Heart left ventricle (tissue), 16 donors: ENCODE measurements at regions of chr18 and their contacts with region 1.

Region 1: GRCh38 chr18:50429207-50429948 is 54.5 kb downstream of the SKA1 start:
- DNase-seq: no peak
- ATAC-seq: no peak
- H3K4me3 ChIP-seq: no peak overlapping the region
- H3K27ac ChIP-seq: no peak overlapping the region
- H3K4me1 ChIP-seq: peaks cover 0 to 2% (median 0%) of the 10 kb centered on the region in 12 donors
- H3K27me3 ChIP-seq: no peaks in the 10 kb centered on the region
- CTCF ChIP-seq: peak in 11 of 12 donors; percentile 32 to 62 (median 55)
- POLR2A ChIP-seq: no peak

Region 2: DNA sequence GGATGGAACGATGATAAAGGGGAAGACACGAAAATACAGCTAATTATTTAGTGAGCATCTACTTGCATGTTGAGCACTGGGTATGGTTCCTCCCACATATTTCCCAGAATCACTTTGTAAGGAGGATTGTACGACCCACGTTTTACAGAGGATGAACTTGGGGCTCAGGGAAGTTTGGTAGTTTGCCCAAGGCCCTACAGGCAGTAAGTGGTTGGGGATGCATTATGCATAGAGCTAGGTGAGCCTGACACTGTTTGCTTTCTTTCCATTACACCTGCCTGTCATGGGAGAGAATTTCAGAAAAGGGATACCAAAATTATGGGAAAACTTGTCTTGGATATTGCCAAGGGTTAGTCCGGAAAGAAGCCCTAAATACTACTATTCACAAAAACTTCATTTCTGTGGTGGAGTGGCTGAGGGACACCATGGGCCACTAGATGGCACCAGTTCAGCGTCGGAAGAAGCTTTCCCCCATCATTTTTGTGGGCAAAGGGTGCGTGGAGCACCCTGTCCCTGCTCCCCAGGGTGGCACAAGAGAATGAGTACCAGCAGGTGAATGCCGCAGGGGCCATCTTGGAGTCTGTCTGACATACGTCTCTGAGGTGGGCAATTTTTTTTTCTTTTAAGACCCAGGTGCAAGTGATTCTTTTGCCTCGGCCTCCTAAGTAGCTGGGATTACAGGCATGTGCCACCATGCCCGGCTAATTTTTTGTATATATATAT is 918.8 kb before region 1 on chr18:
- intact Hi-C with region 1: loop called in 2 of 10 experiments (anchors 5 kb)
- DNase-seq: peak in 4 of 5 donors; percentile 31 to 64 (median 42)
- ATAC-seq: peak in 3 of 4 donors; percentile 52 to 72 (median 66)
- H3K4me3 ChIP-seq: no peak overlapping the region
- H3K27ac ChIP-seq: no peak overlapping the region
- H3K4me1 ChIP-seq: no peaks in the 10 kb centered on the region
- H3K27me3 ChIP-seq: peaks cover 0 to 6% (median 0%) of the 10 kb centered on the region in 9 donors
- CTCF ChIP-seq: peak; percentile 71 to 87 (median 81)
- POLR2A ChIP-seq: no peak

Region 3: DNA sequence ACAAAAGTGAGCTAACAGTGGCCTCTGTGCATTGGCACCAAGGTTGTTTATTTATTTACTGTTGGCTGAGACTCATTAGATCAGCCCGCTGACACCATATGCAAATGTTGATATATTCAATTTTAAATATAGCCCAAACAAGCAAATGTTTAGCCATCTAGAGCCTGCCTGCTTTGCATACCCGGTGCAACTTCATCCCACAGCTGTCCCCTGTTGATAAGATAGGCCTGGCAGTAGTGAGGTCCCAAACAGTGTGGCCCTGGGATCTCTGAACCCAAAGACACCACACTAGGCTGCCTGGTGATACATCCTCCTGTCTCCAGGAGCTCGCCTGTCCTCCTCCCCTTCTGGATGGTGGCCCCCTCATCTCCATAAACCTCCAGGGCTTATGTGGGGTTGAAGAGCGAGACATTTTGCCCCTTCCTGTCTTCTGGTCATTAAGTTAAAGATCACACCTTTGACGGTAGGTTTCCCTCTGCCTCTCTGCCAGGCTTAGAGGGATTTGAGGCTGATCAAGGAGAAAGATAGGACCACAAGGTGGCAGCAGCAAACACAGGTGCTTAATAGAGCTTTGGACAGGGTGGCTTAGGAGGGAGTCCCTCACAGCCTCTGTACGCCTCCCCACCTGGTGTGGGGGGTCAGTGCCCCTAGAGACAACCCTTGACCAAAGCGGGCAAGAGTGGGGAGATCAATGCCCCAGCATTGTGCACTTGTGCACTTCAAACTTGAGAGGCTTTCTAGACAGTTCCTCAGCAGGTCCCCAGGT is 210.8 kb before region 1 on chr18:
- intact Hi-C with region 1: loop called in 6 of 10 experiments (anchors 2 to 10 kb)
- DNase-seq: no peak
- ATAC-seq: peak in 2 of 4 donors; percentile 34 to 46
- H3K4me3 ChIP-seq: no peak overlapping the region
- H3K27ac ChIP-seq: no peak overlapping the region
- H3K4me1 ChIP-seq: peaks cover 0 to 5% (median 0%) of the 10 kb centered on the region in 12 donors
- H3K27me3 ChIP-seq: peaks cover 0 to 5% (median 0%) of the 10 kb centered on the region in 9 donors
- CTCF ChIP-seq: peak in 9 of 12 donors; percentile 10 to 45 (median 30)
- POLR2A ChIP-seq: no peak

Region 4: DNA sequence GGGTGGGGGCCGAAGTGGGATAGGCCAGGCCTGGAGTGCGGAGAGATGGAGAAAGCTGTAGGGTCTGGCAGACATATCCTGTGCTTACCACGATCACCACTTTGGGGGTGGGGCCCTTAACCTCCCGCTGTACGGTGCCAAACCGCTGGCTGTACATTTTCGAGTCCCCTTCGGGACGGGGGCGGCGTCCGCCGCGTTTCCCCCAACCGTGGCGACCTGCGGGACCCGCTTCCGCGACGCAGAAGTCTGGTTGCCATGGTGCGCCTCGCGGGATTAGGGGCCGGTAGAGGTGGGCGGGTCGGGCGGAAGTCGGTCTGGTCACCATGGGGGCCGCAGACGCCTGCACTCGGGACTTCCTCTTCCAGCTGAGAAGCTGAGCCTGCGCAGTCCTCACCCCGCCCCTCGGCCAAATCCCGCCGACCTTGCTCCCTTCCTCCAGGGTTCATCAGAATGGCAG is 163.1 kb before region 1 on chr18 and contains the start of gene CFAP53:
- intact Hi-C with region 1: loop called in 1 of 10 experiments (anchors 5 kb)
- DNase-seq: peak; percentile 94 to 97 (median 96)
- ATAC-seq: peak; percentile 95 to 98 (median 98)
- H3K4me3 ChIP-seq: peak within 1 kb of the TSS; percentile 40 to 83 (median 68)
- H3K27ac ChIP-seq: peak within 1 kb of the TSS in 10 of 12 donors; percentile 6 to 57 (median 20)
- H3K4me1 ChIP-seq: peaks cover 4 to 32% (median 14%) of the 10 kb centered on the region in 12 donors
- H3K27me3 ChIP-seq: no peaks in the 10 kb centered on the region
- CTCF ChIP-seq: no peak
- POLR2A ChIP-seq: peak in 1 of 2 donors; percentile 39
- total RNA-seq, gene CFAP53: 0.14 to 0.62 (median 0.16) TPM in 3 of 9 donors, not detected in the others

Region 5: GRCh38 chr18:50287441-50288347 is 141.7 kb before region 1 on chr18 and contains the start of gene CXXC1:
- intact Hi-C with region 1: loop called in 3 of 10 experiments (anchors 5 to 10 kb)
- DNase-seq: peak; percentile 97 to 99 (median 98)
- ATAC-seq: peak; percentile 95 to 97 (median 96)
- H3K4me3 ChIP-seq: peak within 1 kb of the TSS; percentile 55 to 90 (median 77)
- H3K27ac ChIP-seq: peak within 1 kb of the TSS; percentile 45 to 94 (median 86)
- H3K4me1 ChIP-seq: peaks cover 0 to 20% (median 0%) of the 10 kb centered on the region in 12 donors
- H3K27me3 ChIP-seq: no peaks in the 10 kb centered on the region
- CTCF ChIP-seq: peak; percentile 36 to 63 (median 48)
- POLR2A ChIP-seq: peak in 1 of 2 donors; percentile 44
- total RNA-seq, gene CXXC1: 18.3 to 36.7 (median 33.2) TPM

Region 6: GRCh38 chr18:50441518-50441917 is 12.1 kb after region 1 on chr18:
- intact Hi-C with region 1: no loop called
- DNase-seq: no peak
- ATAC-seq: no peak
- H3K4me3 ChIP-seq: no peak overlapping the region
- H3K27ac ChIP-seq: no peak overlapping the region
- H3K4me1 ChIP-seq: no peaks in the 10 kb centered on the region
- H3K27me3 ChIP-seq: no peaks in the 10 kb centered on the region
- CTCF ChIP-seq: no peak
- POLR2A ChIP-seq: no peak

Region 7: DNA sequence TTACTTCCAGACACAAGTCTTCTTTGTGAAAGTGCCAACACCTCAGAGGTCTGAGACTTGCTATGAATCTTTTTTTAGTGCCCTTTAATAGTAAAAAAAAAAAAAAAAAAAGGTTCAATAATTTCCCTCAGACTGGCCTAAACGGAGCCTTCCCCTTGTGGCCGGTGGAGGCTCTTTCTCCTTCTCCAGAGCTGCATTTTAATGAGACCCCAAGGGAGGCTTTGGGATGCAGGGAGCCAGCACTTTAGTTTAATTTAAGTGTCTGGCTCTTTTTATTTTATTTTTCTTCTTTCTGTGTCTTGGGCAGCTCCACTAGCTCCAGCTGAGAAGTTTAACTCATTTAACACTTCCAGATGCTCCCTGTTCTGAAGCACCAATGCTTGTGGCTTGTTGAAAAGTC is 62.7 kb after region 1 on chr18:
- intact Hi-C with region 1: loop called in 1 of 10 experiments (anchors 10 kb)
- DNase-seq: no peak
- ATAC-seq: no peak
- H3K4me3 ChIP-seq: no peak overlapping the region
- H3K27ac ChIP-seq: no peak overlapping the region
- H3K4me1 ChIP-seq: no peaks in the 10 kb centered on the region
- H3K27me3 ChIP-seq: no peaks in the 10 kb centered on the region
- CTCF ChIP-seq: no peak
- POLR2A ChIP-seq: no peak